Gastrocnemius medialis (tissue), 4 donors: ENCODE measurements at regions of chr3 and their contacts with region 1.

Region 1: DNA sequence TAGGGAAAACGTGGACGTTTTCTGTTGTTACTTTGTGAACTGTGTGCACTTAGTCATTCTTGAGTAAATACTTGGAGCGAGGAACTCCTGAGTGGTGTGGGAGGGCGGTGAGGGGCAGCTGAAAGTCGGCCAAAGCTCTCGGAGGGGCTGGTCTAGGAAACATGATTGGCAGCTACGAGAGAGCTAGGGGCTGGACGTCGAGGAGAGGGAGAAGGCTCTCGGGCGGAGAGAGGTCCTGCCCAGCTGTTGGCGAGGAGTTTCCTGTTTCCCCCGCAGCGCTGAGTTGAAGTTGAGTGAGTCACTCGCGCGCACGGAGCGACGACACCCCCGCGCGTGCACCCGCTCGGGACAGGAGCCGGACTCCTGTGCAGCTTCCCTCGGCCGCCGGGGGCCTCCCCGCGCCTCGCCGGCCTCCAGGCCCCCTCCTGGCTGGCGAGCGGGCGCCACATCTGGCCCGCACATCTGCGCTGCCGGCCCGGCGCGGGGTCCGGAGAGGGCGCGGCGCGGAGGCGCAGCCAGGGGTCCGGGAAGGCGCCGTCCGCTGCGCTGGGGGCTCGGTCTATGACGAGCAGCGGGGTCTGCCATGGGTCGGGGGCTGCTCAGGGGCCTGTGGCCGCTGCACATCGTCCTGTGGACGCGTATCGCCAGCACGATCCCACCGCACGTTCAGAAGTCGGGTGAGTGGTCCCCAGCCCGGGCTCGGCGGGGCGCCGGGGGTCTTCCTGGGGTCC is at the start of gene TGFBR2:
- DNase-seq: peak; percentile 90 to 91
- ATAC-seq: peak; percentile 90 to 92
- H3K4me3 ChIP-seq: peak within 1 kb of the TSS; percentile 69 to 92 (median 81)
- H3K27ac ChIP-seq: peak within 1 kb of the TSS; percentile 76 to 93 (median 86)
- H3K4me1 ChIP-seq: peaks cover 0 to 29% of the 10 kb centered on the region in 2 donors
- H3K27me3 ChIP-seq: no peaks in the 10 kb centered on the region
- CTCF ChIP-seq: peak in 3 of 5 experiments; percentile 23 to 43 (median 33)
- POLR2A ChIP-seq: peak; percentile 71 to 86
- total RNA-seq, gene TGFBR2: 38.3 to 53.8 (median 47.2) TPM

Region 2: DNA sequence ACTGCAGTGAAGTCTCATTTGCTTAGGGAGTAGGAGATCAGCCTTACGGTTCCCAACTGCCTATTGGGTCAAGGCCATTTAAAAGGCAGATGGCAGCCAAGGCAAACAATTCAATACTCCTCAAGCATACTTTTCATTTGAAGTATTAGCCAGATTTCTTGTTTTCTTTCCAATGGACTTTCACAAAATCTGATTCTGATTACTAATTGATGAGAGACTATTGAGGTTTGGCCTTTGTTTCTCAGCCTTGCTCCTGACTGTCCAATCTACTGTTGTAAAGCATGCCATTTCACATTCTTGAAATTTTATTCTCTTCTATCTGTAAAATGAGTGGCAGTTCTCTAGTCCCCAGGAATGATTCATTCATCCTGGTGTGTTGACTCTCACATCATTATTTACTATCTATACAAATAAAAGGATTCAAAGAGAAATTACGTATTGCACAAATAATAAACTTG is 166.3 kb before region 1 on chr3:
- in situ Hi-C with region 1: no loop called
- intact Hi-C with region 1: loop called (anchors 10 kb)
- DNase-seq: no peak
- ATAC-seq: no peak
- H3K4me3 ChIP-seq: no peak overlapping the region
- H3K27ac ChIP-seq: peak overlapping the region; percentile 55 to 81 (median 70)
- H3K4me1 ChIP-seq: peaks cover 18 to 36% of the 10 kb centered on the region in 2 donors
- H3K27me3 ChIP-seq: no peaks in the 10 kb centered on the region
- CTCF ChIP-seq: no peak
- POLR2A ChIP-seq: no peak

Region 3: GRCh38 chr3:30518181-30518864 is 88.1 kb before region 1 on chr3:
- in situ Hi-C with region 1: no loop called
- intact Hi-C with region 1: loop called (anchors 5 kb)
- DNase-seq: peak; percentile 43 to 49
- ATAC-seq: peak; percentile 90 to 92
- H3K4me3 ChIP-seq: no peak overlapping the region
- H3K27ac ChIP-seq: peak overlapping the region; percentile 50 to 71 (median 60)
- H3K4me1 ChIP-seq: peaks cover 18 to 21% of the 10 kb centered on the region in 2 donors
- H3K27me3 ChIP-seq: no peaks in the 10 kb centered on the region
- CTCF ChIP-seq: peak in 1 of 5 experiments; percentile 16
- POLR2A ChIP-seq: no peak

Region 4: DNA sequence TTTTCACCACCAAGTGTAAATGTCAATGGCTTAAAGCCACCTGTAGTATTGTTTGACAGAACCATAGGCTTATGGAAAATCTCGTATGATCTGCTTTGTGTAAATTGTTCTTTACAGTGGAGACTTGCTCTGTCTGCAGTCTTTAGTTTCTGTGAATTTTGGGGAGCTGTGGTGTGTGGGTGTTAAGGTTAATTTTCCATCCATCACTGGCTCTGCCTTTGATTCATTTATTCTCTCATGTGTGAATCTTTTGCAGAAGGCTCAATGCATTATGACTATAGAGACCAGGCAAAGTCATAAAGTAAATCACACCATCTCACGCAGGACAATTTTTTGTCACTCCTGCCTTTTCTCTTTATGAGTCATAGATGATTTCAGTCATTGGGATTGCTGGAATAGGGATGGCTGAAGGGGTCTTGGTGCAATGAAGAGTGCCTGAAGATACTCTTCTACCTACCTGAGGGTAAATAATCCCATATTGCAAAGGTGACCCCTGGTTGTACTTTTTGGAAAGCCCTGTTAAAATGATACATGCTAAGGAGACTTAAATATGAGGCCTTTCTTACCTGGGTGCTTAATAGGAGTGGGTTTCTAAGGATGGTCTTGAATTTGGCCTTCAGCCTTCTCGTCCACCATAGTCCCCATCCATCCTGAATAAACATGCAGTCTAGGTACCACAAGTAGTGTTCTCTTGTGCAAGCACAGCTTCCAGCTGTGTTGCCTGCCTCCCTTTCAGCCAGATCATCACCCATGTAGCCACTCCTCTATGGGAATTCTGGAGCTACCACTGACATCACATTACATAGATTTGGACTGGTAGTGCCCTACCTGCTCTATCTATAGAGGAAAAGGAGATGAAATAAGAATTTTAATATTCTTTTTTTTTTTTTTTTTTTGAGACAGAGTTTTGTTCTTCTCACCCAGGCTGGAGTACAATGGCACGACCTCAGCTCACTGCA is 14.2 kb after region 1 on chr3:
- in situ Hi-C with region 1: no loop called
- intact Hi-C with region 1: no loop called
- DNase-seq: no peak
- ATAC-seq: no peak
- H3K4me3 ChIP-seq: no peak overlapping the region
- H3K27ac ChIP-seq: no peak overlapping the region
- H3K4me1 ChIP-seq: peaks cover 20 to 48% of the 10 kb centered on the region in 2 donors
- H3K27me3 ChIP-seq: no peaks in the 10 kb centered on the region
- CTCF ChIP-seq: no peak
- POLR2A ChIP-seq: no peak

Region 5: GRCh38 chr3:30751610-30752299 is 145.3 kb after region 1 on chr3:
- in situ Hi-C with region 1: no loop called
- intact Hi-C with region 1: no loop called
- DNase-seq: no peak
- ATAC-seq: no peak
- H3K4me3 ChIP-seq: no peak overlapping the region
- H3K27ac ChIP-seq: peak overlapping the region in 1 of 4 donors; percentile 64
- H3K4me1 ChIP-seq: peaks cover 12 to 34% of the 10 kb centered on the region in 2 donors
- H3K27me3 ChIP-seq: no peaks in the 10 kb centered on the region
- CTCF ChIP-seq: no peak
- POLR2A ChIP-seq: no peak

Region 6: DNA sequence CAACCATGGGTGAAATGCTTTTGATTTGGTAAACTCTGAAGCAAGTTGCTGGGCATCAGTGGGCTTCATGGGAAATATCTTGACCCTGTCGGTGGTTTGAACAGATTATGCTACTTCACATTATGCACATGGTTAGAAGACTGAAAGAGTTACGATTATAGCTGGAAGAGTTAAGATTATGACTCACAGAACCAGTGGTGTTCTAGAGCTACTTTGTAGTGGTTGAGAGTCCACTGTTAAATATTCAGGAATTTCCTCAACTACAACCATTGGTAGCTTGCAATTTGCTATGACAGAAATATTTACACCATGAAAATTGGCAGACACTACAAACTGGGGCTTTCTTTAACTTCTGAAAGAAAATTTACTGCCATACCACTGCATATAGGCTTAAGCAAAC is 188.7 kb after region 1 on chr3:
- in situ Hi-C with region 1: no loop called
- intact Hi-C with region 1: no loop called
- DNase-seq: no peak
- ATAC-seq: no peak
- H3K4me3 ChIP-seq: no peak overlapping the region
- H3K27ac ChIP-seq: no peak overlapping the region
- H3K4me1 ChIP-seq: no peaks in the 10 kb centered on the region
- H3K27me3 ChIP-seq: no peaks in the 10 kb centered on the region
- CTCF ChIP-seq: no peak
- POLR2A ChIP-seq: no peak